Activated CD8-positive, alpha-beta memory T cell treated with anti-CD3 and anti-CD28 coated beads, Interleukin-2, amount 10 ng/mL, durations not matched to agents 7 days and 5 days (primary cell): ENCODE measurements at regions of chr5 and their contacts with region 1.

Region 1: GRCh38 chr5:59380350-59380951 is 513.1 kb downstream of the PDE4D start:
- DNase-seq: peak; percentile 73
- ATAC-seq: peak; percentile 96
- H3K4me3 Mint-ChIP-seq: no peak overlapping the region
- H3K27ac Mint-ChIP-seq: peak overlapping the region; percentile 16
- H3K4me1 Mint-ChIP-seq: peaks cover 5% of the 10 kb centered on the region
- H3K27me3 Mint-ChIP-seq: peaks cover 19% of the 10 kb centered on the region

Region 2: DNA sequence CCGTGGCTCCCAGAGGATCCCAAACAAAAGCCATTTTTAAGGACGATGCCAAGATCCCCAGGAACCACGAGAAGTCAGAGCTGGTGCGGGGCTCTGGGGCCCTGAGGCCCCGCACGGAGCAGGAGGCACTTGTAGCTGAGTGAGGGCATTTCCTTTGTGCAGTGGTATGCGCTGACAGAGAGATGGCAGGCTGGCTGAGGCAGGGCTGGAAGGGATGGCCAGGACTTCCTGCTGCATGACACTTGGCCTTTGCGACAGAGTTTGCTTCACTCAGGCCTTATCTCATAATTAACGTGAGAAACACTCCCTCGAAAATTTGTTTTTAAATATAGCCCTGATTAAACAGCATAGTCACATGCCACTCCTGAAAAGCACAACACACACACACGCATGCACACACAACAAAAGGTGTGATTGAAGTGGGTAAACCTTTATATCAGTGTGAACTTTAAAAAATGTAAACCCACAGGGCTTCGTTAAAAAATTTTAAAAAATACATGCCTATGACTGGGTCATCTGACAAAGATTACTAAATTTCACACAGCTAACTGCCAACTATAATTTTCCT is 23.6 kb before region 1 on chr5:
- CTCF ChIA-PET with region 1: no interaction called
- DNase-seq: no peak
- ATAC-seq: no peak
- H3K4me3 Mint-ChIP-seq: no peak overlapping the region
- H3K27ac Mint-ChIP-seq: no peak overlapping the region
- H3K4me1 Mint-ChIP-seq: no peaks in the 10 kb centered on the region
- H3K27me3 Mint-ChIP-seq: peaks cover 44% of the 10 kb centered on the region

Region 3: GRCh38 chr5:59367791-59368394 is 12.6 kb before region 1 on chr5:
- CTCF ChIA-PET with region 1: interaction called, 15 read pairs
- DNase-seq: peak; percentile 62
- ATAC-seq: no peak
- H3K4me3 Mint-ChIP-seq: no peak overlapping the region
- H3K27ac Mint-ChIP-seq: no peak overlapping the region
- H3K4me1 Mint-ChIP-seq: peaks cover 13% of the 10 kb centered on the region
- H3K27me3 Mint-ChIP-seq: peaks cover 36% of the 10 kb centered on the region

Region 4: GRCh38 chr5:59506285-59506877 is 125.9 kb after region 1 on chr5:
- CTCF ChIA-PET with region 1: no interaction called
- DNase-seq: no peak
- ATAC-seq: no peak
- H3K4me3 Mint-ChIP-seq: no peak overlapping the region
- H3K27ac Mint-ChIP-seq: no peak overlapping the region
- H3K4me1 Mint-ChIP-seq: no peaks in the 10 kb centered on the region
- H3K27me3 Mint-ChIP-seq: peaks cover 2% of the 10 kb centered on the region